Mucosa of descending colon (tissue), 3 donors: ENCODE measurements at regions of chr11 and their contacts with region 1.

Region 1: GRCh38 chr11:14907411-14908213 is 15.6 kb upstream of the CYP2R1 start:
- DNase-seq: peak; percentile 86 to 94 (median 93)
- ATAC-seq: peak; percentile 90
- H3K4me3 ChIP-seq: no peak overlapping the region
- H3K4me1 ChIP-seq: no peaks in the 10 kb centered on the region
- CTCF ChIP-seq: peak; percentile 88

Region 2: GRCh38 chr11:14537134-14537599 is 370.4 kb before region 1 on chr11:
- intact Hi-C with region 1: loop called in 1 of 2 experiments (anchors 5 kb)
- DNase-seq: peak in 1 of 3 donors; percentile 76
- ATAC-seq: peak; percentile 79
- H3K4me3 ChIP-seq: no peak overlapping the region
- H3K4me1 ChIP-seq: peaks cover 7% of the 10 kb centered on the region
- CTCF ChIP-seq: peak; percentile 78

Region 3: GRCh38 chr11:15075162-15075526 is 167.5 kb after region 1 on chr11:
- intact Hi-C with region 1: loop called in 1 of 2 experiments (anchors 5 kb)
- DNase-seq: no peak
- ATAC-seq: no peak
- H3K4me3 ChIP-seq: no peak overlapping the region
- H3K4me1 ChIP-seq: peaks cover 18% of the 10 kb centered on the region
- CTCF ChIP-seq: no peak